ENCODE measurements at regions of chrX and their contacts with region 1.

Region 1: GRCh38 chrX:41441934-41442823 is 5.0 kb upstream of the NYX start:
- DNase-seq: peak; percentile 19 to 92
- H3K4me3 ChIP-seq: peak overlapping the region; percentile 30 to 64 (median 46)
- H3K27ac ChIP-seq: no peak overlapping the region
- H3K4me1 ChIP-seq: peaks cover 0 to 6% (median under 1%) of the 10 kb centered on the region in 4 experiments; a peak in 4 of 7 replicates
- H3K27me3 ChIP-seq: no peaks in the 10 kb centered on the region
- CTCF ChIP-seq: peak; percentile 52 to 60 (median 54); a peak in 3 of 4 replicates
- EP300 ChIP-seq: no peak
- POLR2A ChIP-seq: no peak
- RAD21 ChIP-seq: peak; percentile 51 to 70

Region 2: DNA sequence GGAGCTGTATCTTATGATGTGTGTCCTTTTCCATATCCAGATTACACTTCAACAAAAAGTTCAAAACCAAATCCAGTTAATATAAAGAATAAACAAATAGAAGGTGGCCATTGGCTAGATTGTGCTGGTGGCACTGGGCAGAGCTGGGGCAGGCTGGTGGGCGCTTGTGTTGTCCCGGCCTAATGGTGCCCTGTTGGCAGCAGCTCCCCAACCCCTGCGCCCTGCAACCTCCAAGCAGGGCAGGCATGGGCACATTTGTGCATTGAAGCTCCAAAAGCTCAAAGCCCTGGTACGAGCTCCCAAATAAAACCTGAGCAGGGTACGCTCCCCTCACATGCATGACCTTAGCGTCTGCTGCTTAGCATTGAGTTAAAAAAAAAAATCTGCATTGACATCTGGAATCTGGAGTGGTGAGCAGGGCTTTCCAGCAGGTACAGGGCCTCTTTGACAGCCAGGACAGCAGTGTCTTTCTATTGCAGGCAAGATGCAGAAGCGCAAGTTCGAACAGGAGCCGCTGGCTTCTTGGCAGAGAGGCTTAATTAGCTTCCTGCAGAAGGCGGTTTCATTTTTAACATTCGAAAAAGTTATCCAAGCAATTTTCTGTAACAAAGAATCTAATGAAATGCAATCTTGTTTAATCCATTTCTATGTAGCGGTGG is 21.0 kb before region 1 on chrX:
- CTCF ChIA-PET with region 1: no interaction called
- POLR2A ChIA-PET with region 1: no interaction called
- DNase-seq: no peak
- H3K4me3 ChIP-seq: no peak overlapping the region
- H3K27ac ChIP-seq: no peak overlapping the region
- H3K4me1 ChIP-seq: no peaks in the 10 kb centered on the region
- H3K27me3 ChIP-seq: no peaks in the 10 kb centered on the region
- CTCF ChIP-seq: no peak
- EP300 ChIP-seq: no peak
- POLR2A ChIP-seq: no peak
- RAD21 ChIP-seq: no peak

Region 3: DNA sequence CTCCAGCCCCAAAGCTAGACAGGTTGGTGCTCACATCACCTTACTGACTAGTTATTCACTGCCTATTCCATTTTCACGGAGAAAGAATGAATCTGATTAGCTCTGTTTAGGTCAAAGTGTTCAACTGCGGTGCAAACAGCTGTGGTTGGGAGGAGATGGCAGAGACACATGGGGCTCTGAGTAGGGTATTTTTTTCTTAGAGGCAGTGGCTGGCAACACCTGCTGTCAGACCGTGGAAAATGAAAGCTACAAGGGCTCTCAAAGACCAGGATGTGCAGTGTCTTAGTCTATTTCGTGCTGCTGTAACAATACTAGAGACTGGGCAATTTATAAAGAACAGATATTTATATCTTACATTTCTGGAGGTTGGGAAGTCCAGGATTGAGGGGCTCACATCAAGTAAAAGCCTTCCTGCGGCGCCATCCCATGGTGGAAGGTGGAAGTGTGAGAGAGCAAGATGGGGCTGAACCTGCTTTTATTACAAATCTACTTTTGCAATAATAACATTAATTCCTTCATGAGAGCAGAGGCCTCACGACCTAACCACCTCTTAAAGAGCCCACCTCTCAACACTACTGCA is 15.5 kb after region 1 on chrX:
- CTCF ChIA-PET with region 1: interaction called, 11 read pairs
- POLR2A ChIA-PET with region 1: no interaction called
- DNase-seq: peak in 1 of 2 experiments; percentile 65
- H3K4me3 ChIP-seq: no peak overlapping the region
- H3K27ac ChIP-seq: no peak overlapping the region
- H3K4me1 ChIP-seq: no peaks in the 10 kb centered on the region
- H3K27me3 ChIP-seq: no peaks in the 10 kb centered on the region
- CTCF ChIP-seq: peak; percentile 37 to 58 (median 55)
- EP300 ChIP-seq: no peak
- POLR2A ChIP-seq: no peak
- RAD21 ChIP-seq: peak; percentile 69 to 76

Measured in H1 (cell line).